AG04449 (cell line): ENCODE measurements at regions of chr7 and their contacts with region 1.

Region 1: DNA sequence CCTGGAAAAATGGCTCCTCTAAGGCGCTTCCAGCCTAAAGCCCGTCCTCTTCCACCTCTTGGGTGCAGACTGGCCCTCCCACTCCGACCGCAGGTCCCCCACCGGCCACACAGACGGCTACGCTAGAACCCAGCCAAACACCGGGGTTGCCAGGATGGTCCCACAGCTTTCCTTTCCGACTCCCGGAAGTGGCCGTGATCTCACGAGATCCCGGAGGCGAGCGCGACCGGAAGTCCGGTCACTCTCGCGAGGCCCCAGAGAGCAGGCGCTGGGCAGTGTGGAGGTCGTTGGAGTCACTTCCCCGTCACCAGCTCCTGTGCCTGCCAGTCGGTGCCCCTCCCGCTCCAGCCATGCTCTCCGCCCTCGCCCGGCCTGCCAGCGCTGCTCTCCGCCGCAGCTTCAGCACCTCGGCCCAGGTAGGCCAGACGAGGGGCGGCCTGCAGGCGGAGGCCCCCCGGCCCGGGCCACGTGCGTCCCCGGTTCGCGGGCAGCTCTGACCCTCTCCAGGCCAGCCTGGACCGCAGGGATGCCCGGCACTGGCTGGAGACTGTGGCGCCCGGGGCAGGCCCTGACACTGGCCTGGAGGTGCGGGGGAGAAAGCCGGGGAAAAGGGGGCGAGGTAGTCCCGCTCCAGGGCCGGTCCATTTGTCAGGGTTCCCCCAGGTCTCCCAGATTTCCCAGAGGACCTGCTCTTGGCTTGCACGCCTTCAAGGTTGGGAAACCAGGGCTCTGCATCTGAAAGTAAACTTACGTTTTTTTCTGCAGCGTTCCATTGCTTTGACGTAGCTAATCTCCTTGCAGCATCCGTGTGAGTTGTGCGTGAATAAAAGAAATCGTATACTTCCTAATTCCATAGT is at the starts of genes MDH2 and STYXL1:
- DNase-seq: peak; percentile 63
- H3K4me3 ChIP-seq: peak within 1 kb of the TSS; percentile 94
- CTCF ChIP-seq: no peak

Region 2: GRCh38 chr7:75979759-75980429 is 68.1 kb before region 1 on chr7:
- CTCF ChIA-PET with region 1: no interaction called
- POLR2A ChIA-PET with region 1: no interaction called
- DNase-seq: no peak
- H3K4me3 ChIP-seq: no peak overlapping the region
- CTCF ChIP-seq: no peak

Region 3: GRCh38 chr7:76037310-76037709 is 10.7 kb before region 1 on chr7:
- CTCF ChIA-PET with region 1: interaction called, 3 read pairs
- POLR2A ChIA-PET with region 1: interaction called, 23 read pairs
- DNase-seq: peak; percentile 67
- H3K4me3 ChIP-seq: no peak overlapping the region
- CTCF ChIP-seq: no peak